CD4-positive, alpha-beta memory T cell (primary cell): ENCODE measurements at regions of chr18 and their contacts with region 1.

Region 1: DNA sequence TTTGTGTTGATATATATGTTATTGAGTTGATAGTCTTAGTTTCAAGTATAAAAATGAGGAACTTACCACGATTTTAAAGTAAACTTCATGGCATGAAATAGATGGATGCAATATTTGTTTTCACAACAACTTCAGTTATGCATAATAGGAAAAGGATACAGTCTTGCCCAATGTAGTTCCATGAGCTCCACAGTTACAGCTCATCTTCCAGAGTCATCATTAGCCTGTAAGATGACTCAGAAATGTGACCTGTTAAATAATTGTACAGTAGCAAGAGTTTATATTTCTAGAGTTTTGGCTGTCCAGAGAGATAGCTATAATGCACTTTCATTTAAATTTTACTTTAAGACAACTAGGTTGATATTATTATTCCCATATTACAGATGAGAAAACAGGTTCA is 80.9 kb upstream of the ARHGAP28 start:
- DNase-seq: no peak
- H3K4me3 ChIP-seq: no peak overlapping the region
- H3K4me3 Mint-ChIP-seq: no peak overlapping the region
- H3K27ac ChIP-seq: no peak overlapping the region
- H3K27ac Mint-ChIP-seq: no peak overlapping the region
- H3K4me1 ChIP-seq: no peaks in the 10 kb centered on the region
- H3K4me1 Mint-ChIP-seq: no peaks in the 10 kb centered on the region
- H3K27me3 ChIP-seq: no peaks in the 10 kb centered on the region
- H3K27me3 Mint-ChIP-seq: no peaks in the 10 kb centered on the region

Region 2: GRCh38 chr18:6687676-6688075 is 39.1 kb after region 1 on chr18:
- CTCF ChIA-PET with region 1: no interaction called
- POLR2A ChIA-PET with region 1: no interaction called
- intact Hi-C with region 1: loop called (anchors 2 kb)
- DNase-seq: no peak
- H3K4me3 ChIP-seq: no peak overlapping the region
- H3K4me3 Mint-ChIP-seq: no peak overlapping the region
- H3K27ac ChIP-seq: no peak overlapping the region
- H3K27ac Mint-ChIP-seq: no peak overlapping the region
- H3K4me1 ChIP-seq: no peaks in the 10 kb centered on the region
- H3K4me1 Mint-ChIP-seq: no peaks in the 10 kb centered on the region
- H3K27me3 ChIP-seq: no peaks in the 10 kb centered on the region
- H3K27me3 Mint-ChIP-seq: no peaks in the 10 kb centered on the region

Region 3: GRCh38 chr18:6714010-6714409 is 65.4 kb after region 1 on chr18:
- CTCF ChIA-PET with region 1: no interaction called
- POLR2A ChIA-PET with region 1: no interaction called
- intact Hi-C with region 1: no loop called
- DNase-seq: no peak
- H3K4me3 ChIP-seq: no peak overlapping the region
- H3K4me3 Mint-ChIP-seq: no peak overlapping the region
- H3K27ac ChIP-seq: no peak overlapping the region
- H3K27ac Mint-ChIP-seq: no peak overlapping the region
- H3K4me1 ChIP-seq: no peaks in the 10 kb centered on the region
- H3K4me1 Mint-ChIP-seq: no peaks in the 10 kb centered on the region
- H3K27me3 ChIP-seq: no peaks in the 10 kb centered on the region
- H3K27me3 Mint-ChIP-seq: no peaks in the 10 kb centered on the region

Region 4: GRCh38 chr18:7248877-7249276 is 600.3 kb after region 1 on chr18:
- CTCF ChIA-PET with region 1: no interaction called
- POLR2A ChIA-PET with region 1: no interaction called
- intact Hi-C with region 1: no loop called
- DNase-seq: no peak
- H3K4me3 ChIP-seq: no peak overlapping the region
- H3K4me3 Mint-ChIP-seq: no peak overlapping the region
- H3K27ac ChIP-seq: no peak overlapping the region
- H3K27ac Mint-ChIP-seq: no peak overlapping the region
- H3K4me1 ChIP-seq: no peaks in the 10 kb centered on the region
- H3K4me1 Mint-ChIP-seq: no peaks in the 10 kb centered on the region
- H3K27me3 ChIP-seq: no peaks in the 10 kb centered on the region
- H3K27me3 Mint-ChIP-seq: no peaks in the 10 kb centered on the region